ENCODE measurements at regions of chr11 and their contacts with region 1.

Region 1: DNA sequence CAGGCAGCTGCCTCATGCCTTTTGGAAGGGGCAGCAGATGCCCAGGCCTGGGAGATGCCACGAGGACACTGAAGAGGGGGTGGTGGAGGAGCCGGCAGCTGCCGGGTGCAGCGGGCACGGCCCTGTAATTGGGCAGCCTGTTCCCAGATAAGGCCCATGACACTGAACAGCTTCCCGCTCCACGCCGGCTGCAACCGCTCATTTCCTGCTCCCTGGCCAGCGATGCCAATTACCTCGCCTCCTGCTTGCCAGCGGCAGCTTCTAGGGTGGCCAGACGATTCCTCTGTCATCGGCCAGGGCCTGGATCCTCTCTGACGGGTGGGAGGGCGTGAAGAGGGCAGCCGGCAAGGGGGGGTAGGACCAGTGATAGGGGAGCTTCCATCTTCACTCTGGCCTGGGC is 22.8 kb downstream of the FLRT1 start:
- DNase-seq: peak; percentile 76 to 84 (median 81)
- ATAC-seq: peak; percentile 80 to 93 (median 86)
- H3K4me3 ChIP-seq: no peak overlapping the region
- H3K27ac ChIP-seq: peak overlapping the region in 9 of 12 donors; percentile 57 to 74 (median 66)
- H3K4me1 ChIP-seq: peaks cover 2 to 65% (median 20%) of the 10 kb centered on the region in 12 donors
- H3K27me3 ChIP-seq: peaks cover 0 to 19% (median 0%) of the 10 kb centered on the region in 9 donors
- CTCF ChIP-seq: no peak
- POLR2A ChIP-seq: no peak

Region 2: DNA sequence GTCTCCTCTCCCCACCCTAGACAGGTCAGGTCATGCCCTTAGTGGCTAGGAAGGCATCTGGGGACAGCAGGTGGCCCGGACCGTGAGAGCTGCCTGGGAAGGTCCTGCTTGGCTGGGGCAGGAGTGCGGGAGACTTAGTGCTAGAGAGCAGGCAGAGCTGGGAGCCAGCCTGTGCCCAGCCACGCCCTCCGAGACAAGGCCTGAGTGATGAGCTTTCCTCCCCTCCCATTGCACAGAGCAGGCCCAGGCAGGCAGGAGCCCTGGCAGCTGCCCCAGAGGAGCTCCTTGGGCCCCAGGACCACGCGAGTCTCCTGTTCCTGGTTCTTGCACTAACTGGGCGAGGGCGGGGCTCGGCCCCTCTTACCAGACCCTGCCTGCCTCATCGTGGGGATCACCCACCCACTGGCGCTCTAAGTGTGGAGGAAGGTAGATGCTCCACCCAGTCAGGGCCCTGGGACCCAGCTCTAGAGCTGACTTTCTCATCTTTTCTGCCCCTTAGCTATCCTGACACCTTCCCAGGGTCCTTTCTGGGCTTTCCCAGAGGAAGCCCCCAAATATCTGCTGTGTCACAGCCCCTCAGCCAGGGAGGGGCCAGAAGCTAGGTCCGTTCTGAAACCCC is 62.6 kb after region 1 on chr11:
- intact Hi-C with region 1: loop called in 1 of 10 experiments (anchors 10 kb)
- DNase-seq: peak in 4 of 5 donors; percentile 24 to 67 (median 51)
- ATAC-seq: peak; percentile 62 to 82 (median 80)
- H3K4me3 ChIP-seq: no peak overlapping the region
- H3K27ac ChIP-seq: peak overlapping the region in 2 of 12 donors; percentile 3 to 71
- H3K4me1 ChIP-seq: peaks cover 0 to 23% (median 5%) of the 10 kb centered on the region in 12 donors
- H3K27me3 ChIP-seq: no peaks in the 10 kb centered on the region
- CTCF ChIP-seq: no peak
- POLR2A ChIP-seq: no peak

Measured in heart left ventricle (tissue), 16 donors.